Breast epithelium (tissue), 4 donors: ENCODE measurements at regions of chr14 and their contacts with region 1.

Region 1: GRCh38 chr14:63454863-63455622 is 88.1 kb downstream of the PPP2R5E start:
- DNase-seq: no peak
- H3K4me3 ChIP-seq: no peak overlapping the region
- H3K27ac ChIP-seq: no peak overlapping the region
- H3K4me1 ChIP-seq: no peaks in the 10 kb centered on the region
- H3K27me3 ChIP-seq: no peaks in the 10 kb centered on the region
- CTCF ChIP-seq: no peak
- POLR2A ChIP-seq: no peak

Region 2: GRCh38 chr14:61503167-61503801 is 1951.8 kb before region 1 on chr14:
- intact Hi-C with region 1: loop called (anchors 10 kb)
- DNase-seq: no peak
- H3K4me3 ChIP-seq: no peak overlapping the region
- H3K27ac ChIP-seq: peak overlapping the region; percentile 58 to 60
- H3K4me1 ChIP-seq: no peaks in the 10 kb centered on the region
- H3K27me3 ChIP-seq: no peaks in the 10 kb centered on the region
- CTCF ChIP-seq: no peak
- POLR2A ChIP-seq: no peak

Region 3: DNA sequence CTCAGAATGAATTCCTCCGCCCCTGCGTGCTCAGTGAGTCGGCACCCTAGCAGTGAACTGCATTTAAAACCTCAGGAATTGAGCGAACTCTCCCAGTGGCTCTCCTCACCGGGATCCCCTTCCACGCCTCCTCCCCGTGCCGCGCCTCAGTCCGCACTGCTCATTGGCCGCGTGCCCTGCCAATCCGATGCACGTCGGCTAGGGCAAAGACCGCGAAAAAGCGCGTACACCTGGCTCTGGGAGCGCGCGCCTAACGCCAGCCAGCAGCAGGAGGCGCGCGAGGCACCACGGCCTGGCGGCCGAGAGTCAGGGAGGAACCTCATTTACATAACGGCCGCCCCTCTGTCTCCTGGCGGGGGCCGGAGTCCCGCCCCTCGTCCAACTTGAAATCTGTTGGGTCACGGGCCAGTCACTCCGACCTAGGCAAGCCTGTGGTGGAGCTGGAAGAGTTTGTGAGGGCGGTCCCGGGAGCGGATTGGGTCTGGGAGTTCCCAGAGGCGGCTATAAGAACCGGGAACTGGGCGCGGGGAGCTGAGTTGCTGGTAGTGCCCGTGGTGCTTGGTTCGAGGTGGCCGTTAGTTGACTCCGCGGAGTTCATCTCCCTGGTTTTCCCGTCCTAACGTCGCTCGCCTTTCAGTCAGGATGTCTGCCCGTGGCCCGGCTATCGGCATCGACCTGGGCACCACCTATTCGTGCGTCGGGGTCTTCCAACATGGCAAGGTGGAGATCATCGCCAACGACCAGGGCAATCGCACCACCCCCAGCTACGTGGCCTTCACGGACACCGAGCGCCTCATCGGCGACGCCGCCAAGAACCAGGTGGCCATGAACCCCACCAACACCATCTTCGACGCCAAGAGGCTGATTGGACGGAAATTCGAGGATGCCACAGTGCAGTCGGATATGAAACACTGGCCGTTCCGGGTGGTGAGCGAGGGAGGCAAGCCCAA is 1085.4 kb after region 1 on chr14 and contains the start of gene HSPA2:
- intact Hi-C with region 1: no loop called
- DNase-seq: peak; percentile 99
- H3K4me3 ChIP-seq: peak within 1 kb of the TSS; percentile 51 to 76 (median 71)
- H3K27ac ChIP-seq: peak within 1 kb of the TSS; percentile 89 to 91
- H3K4me1 ChIP-seq: no peaks in the 10 kb centered on the region
- H3K27me3 ChIP-seq: no peaks in the 10 kb centered on the region
- CTCF ChIP-seq: peak; percentile 56 to 84 (median 80)
- POLR2A ChIP-seq: peak; percentile 90
- total RNA-seq, gene HSPA2: 12.2 to 33.1 (median 17.9) TPM